ENCODE measurements at regions of chr19 and their contacts with region 1.

Region 1: GRCh38 chr19:11374433-11375142 is at the start of gene SWSAP1:
- DNase-seq: peak; percentile 94
- H3K4me3 ChIP-seq: peak within 1 kb of the TSS; percentile 65
- CTCF ChIP-seq: no peak

Region 2: DNA sequence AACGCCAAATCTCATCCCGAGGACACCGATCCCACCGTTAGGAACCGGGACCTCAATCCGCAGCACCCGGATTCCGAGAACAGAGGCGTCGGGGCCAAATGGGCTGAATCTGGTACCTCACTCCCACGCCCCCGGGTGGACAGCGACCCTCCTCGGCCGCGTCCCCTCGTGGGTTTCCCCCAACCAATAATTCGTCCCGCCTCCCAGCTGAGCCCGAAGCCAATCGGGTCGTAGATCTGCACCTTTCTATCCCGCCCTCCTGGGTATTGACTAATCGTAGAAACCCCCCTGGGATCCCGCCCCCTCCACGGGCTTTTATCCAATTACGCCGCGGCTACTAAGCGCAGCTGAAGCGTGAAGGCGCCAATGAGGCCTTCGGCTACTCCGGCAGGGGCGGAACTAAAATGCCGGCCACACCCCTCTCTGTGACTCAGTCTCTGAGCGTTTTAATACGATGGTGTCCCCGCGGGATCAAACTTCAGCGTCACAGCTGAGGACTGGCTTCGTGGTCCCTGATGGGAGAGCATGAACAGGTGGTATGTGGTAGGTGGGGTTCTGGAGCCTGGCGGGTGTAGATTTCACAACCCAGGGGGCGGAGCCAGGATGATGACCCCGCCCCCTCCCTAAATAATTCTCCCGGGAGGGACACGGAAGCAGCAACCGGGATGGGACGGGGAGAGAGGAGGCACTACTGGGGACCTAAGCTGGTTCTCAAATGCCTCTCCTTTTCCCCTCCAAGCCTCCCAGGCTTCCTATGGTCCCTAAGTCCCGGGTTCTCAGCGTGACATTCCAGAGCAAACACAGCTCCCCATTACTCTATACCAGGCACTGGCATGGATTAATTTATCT is 28.3 kb before region 1 on chr19 and contains the starts of genes CCDC159 and TMEM205:
- CTCF ChIA-PET with region 1: interaction called, 4 read pairs
- POLR2A ChIA-PET with region 1: interaction called, 10 read pairs
- DNase-seq: peak; percentile 95
- H3K4me3 ChIP-seq: peak within 1 kb of the TSS; percentile 90
- CTCF ChIP-seq: peak; percentile 12

Region 3: DNA sequence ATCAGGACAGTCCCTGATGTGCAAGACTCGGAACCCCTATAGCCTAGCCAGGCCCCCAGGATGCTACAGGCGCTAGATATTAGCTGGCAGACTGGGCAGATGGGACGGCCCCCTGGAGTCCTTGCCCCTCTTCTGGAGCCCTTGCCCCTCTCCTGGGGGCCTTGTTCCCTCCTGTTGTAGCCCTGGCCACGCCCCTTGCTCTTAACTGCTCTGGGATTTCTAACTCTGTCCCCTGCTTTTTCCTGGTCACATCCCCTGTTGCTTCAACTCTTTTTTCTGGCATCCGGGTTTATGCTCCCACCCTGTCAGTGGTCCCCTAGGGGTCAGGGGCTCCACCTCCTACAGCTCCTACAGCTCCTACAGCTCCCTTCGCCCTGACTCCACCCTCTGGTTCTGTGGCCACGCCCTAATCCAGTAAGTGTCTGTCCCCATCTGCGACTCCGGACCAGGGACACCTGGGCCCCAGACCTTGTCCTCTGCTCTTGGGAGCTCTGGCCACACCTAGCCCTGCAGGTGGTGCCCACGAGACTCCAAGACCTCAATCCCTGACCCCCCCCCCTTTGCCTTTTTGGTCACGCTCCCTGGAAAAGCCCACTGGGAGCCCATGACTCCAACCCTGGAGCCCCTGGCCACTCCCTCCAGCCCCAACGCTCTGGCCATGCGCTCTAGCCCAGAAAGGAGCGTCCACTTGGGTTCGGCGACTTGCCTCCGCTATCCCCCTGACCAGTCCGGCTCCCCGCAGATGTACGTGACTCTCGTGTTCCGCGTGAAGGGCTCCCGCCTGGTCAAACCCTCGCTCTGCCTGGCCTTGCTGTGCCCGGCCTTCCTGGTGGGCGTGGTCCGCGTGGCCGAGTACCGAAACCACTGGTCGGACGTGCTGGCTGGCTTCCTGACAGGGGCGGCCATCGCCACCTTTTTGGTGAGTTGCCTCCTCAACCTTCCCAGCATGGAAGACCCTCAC is 12.5 kb before region 1 on chr19:
- CTCF ChIA-PET with region 1: interaction called, 3 read pairs
- POLR2A ChIA-PET with region 1: interaction called, 11 read pairs
- DNase-seq: no peak
- H3K4me3 ChIP-seq: no peak overlapping the region
- CTCF ChIP-seq: no peak

Region 4: GRCh38 chr19:11528551-11529341 is 154.2 kb after region 1 on chr19 and contains the start of gene ECSIT:
- CTCF ChIA-PET with region 1: no interaction called
- POLR2A ChIA-PET with region 1: no interaction called
- DNase-seq: peak; percentile 90
- H3K4me3 ChIP-seq: peak within 1 kb of the TSS; percentile 85
- CTCF ChIP-seq: no peak

Measured in AG04449 (cell line).